Common myeloid progenitor, CD34-positive (primary cell): ENCODE measurements at regions of chr4 and their contacts with region 1.

Region 1: GRCh38 chr4:77075869-77076799 is at the start of gene CCNI:
- DNase-seq: peak; percentile 98
- H3K4me3 ChIP-seq: peak within 1 kb of the TSS; percentile 79 to 99 (median 93)
- H3K27ac ChIP-seq: peak within 1 kb of the TSS; percentile 100
- H3K4me1 ChIP-seq: peaks cover 21 to 55% (median 46%) of the 10 kb centered on the region in 4 experiments
- H3K27me3 ChIP-seq: no peaks in the 10 kb centered on the region

Region 2: DNA sequence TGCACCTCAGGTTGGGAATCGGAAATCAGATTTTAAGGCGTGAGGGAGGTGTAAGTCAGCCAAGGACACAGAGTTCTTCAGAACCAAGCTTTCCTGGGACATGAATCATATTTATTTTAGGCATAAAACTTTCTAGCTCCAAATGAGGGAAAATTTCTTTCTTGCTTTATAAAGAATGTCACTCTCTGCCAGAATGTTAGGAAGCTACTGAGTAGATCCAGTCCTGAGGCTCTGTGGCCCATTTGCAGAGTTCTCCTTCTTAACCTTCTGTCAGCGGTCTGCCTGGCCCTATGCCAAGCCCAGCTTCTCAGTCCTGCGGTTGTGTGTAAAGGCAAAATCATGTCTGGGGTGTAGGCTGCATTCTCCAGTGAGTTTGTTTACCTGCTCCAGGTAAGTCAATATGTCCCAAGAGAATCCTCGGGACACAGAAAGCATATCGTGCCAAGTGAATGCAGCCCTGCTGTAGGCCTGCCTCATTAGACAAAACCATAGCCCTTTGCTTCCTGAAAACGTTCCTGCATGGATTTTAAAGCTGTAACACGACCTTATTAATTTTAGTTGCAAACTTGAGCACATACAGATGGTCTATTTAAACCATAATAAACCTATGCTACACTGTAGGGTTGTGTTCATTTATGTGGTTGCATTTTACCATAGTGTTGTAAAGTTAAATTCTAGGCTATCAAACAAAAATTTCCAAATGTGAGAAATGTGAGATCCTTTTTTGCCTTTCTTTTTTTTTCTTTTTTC is 28.8 kb after region 1 on chr4:
- CTCF ChIA-PET with region 1: interaction called, 11 read pairs
- POLR2A ChIA-PET with region 1: interaction called, 3 read pairs
- DNase-seq: peak; percentile 70 to 92 (median 90)
- H3K4me3 ChIP-seq: no peak overlapping the region
- H3K27ac ChIP-seq: no peak overlapping the region
- H3K4me1 ChIP-seq: peaks cover 12 to 20% (median 16%) of the 10 kb centered on the region in 4 experiments
- H3K27me3 ChIP-seq: no peaks in the 10 kb centered on the region

Region 3: GRCh38 chr4:77172336-77172735 is 96.2 kb after region 1 on chr4:
- CTCF ChIA-PET with region 1: no interaction called
- POLR2A ChIA-PET with region 1: no interaction called
- DNase-seq: no peak
- H3K4me3 ChIP-seq: no peak overlapping the region
- H3K27ac ChIP-seq: no peak overlapping the region
- H3K4me1 ChIP-seq: peaks cover 0 to 3% (median 0%) of the 10 kb centered on the region in 4 experiments
- H3K27me3 ChIP-seq: no peaks in the 10 kb centered on the region